Heart left ventricle (tissue), 16 donors: ENCODE measurements at regions of chr2 and their contacts with region 1.

Region 1: GRCh38 chr2:37877457-37878315 is 47.4 kb upstream of the RMDN2 start:
- DNase-seq: peak in 1 of 5 donors; percentile 39
- ATAC-seq: peak; percentile 43 to 64 (median 46)
- H3K4me3 ChIP-seq: peak overlapping the region in 1 of 12 donors; percentile 12
- H3K27ac ChIP-seq: peak overlapping the region in 2 of 12 donors; percentile 5 to 8
- H3K4me1 ChIP-seq: peaks cover 0 to 47% (median 27%) of the 10 kb centered on the region in 12 donors
- H3K27me3 ChIP-seq: peaks cover 0 to 2% (median 0%) of the 10 kb centered on the region in 9 donors
- CTCF ChIP-seq: peak; percentile 61 to 87 (median 82)
- POLR2A ChIP-seq: no peak

Region 2: GRCh38 chr2:37173741-37174140 is 703.9 kb before region 1 on chr2:
- intact Hi-C with region 1: loop called in 1 of 10 experiments (anchors 10 kb)
- DNase-seq: no peak
- ATAC-seq: no peak
- H3K4me3 ChIP-seq: no peak overlapping the region
- H3K27ac ChIP-seq: no peak overlapping the region
- H3K4me1 ChIP-seq: no peaks in the 10 kb centered on the region
- H3K27me3 ChIP-seq: no peaks in the 10 kb centered on the region
- CTCF ChIP-seq: no peak
- POLR2A ChIP-seq: no peak

Region 3: DNA sequence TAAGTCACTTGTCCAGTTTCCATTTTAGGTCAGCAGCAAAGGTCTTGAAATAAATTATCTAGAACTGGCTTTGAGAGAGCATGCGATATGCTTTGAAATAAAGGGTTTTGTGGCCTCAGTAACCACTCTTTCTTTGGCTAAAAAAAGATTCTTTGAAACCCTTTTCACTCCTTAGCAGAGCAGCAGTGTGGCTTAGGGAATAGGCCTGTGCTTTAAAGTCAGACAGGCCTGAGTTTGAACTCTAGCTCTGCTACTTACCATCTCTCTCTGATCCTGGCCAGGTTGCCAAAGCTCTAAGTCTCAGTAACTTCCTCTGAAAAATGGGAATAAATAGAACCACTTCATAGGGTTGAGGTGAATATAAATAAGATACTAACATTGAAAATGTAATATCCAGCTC is 480.5 kb before region 1 on chr2:
- intact Hi-C with region 1: loop called in 7 of 10 experiments (anchors 1 to 5 kb)
- DNase-seq: no peak
- ATAC-seq: no peak
- H3K4me3 ChIP-seq: no peak overlapping the region
- H3K27ac ChIP-seq: no peak overlapping the region
- H3K4me1 ChIP-seq: peaks cover 0 to 27% (median 0%) of the 10 kb centered on the region in 12 donors
- H3K27me3 ChIP-seq: no peaks in the 10 kb centered on the region
- CTCF ChIP-seq: no peak
- POLR2A ChIP-seq: no peak

Region 4: GRCh38 chr2:37529830-37530415 is 347.8 kb before region 1 on chr2:
- intact Hi-C with region 1: loop called in 1 of 10 experiments (anchors 10 kb)
- DNase-seq: no peak
- ATAC-seq: no peak
- H3K4me3 ChIP-seq: no peak overlapping the region
- H3K27ac ChIP-seq: no peak overlapping the region
- H3K4me1 ChIP-seq: peaks cover 0 to 12% (median 2%) of the 10 kb centered on the region in 12 donors
- H3K27me3 ChIP-seq: no peaks in the 10 kb centered on the region
- CTCF ChIP-seq: no peak
- POLR2A ChIP-seq: no peak

Region 5: DNA sequence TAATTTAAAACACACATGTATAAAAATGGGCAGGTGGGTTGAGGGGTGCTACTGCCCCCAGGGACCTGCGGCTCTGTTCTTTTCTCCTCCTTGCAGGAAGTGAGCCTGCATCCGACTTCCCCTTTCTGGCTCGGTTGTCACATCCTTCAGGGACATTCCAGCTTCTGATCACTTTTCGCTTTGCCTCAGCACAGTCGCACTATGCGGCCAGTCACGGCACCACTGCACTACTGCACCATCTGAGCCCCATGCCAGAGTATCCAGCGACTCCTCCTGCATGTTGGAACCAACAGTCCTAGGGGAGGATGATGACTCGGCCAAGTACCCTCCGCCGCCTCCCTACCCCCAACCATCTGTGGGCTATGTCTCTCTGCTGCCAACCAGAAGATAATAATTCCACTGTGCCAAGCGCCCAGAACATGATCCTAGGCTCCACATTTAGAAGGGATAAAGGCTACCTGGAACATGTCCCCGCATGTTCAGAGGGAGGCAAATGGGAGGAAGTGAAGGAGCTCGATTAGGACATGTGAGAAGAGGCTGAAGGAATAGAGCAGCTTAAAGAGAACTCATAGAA is 223.8 kb before region 1 on chr2:
- intact Hi-C with region 1: loop called in 5 of 10 experiments (anchors 5 to 10 kb)
- DNase-seq: peak; percentile 70 to 89 (median 79)
- ATAC-seq: peak; percentile 74 to 87 (median 79)
- H3K4me3 ChIP-seq: peak overlapping the region in 9 of 12 donors; percentile 1 to 38 (median 19)
- H3K27ac ChIP-seq: peak overlapping the region; percentile 76 to 95 (median 90)
- H3K4me1 ChIP-seq: peaks cover 28 to 98% (median 90%) of the 10 kb centered on the region in 12 donors
- H3K27me3 ChIP-seq: no peaks in the 10 kb centered on the region
- CTCF ChIP-seq: no peak
- POLR2A ChIP-seq: peak in 1 of 2 donors; percentile 34

Region 6: GRCh38 chr2:37672104-37672869 is 205.4 kb before region 1 on chr2:
- intact Hi-C with region 1: loop called in 5 of 10 experiments (anchors 2 to 10 kb)
- DNase-seq: peak; percentile 83 to 87 (median 84)
- ATAC-seq: peak; percentile 68 to 86 (median 73)
- H3K4me3 ChIP-seq: peak overlapping the region; percentile 54 to 99 (median 92)
- H3K27ac ChIP-seq: peak overlapping the region; percentile 92 to 100 (median 98)
- H3K4me1 ChIP-seq: peaks cover 0 to 64% (median 14%) of the 10 kb centered on the region in 12 donors
- H3K27me3 ChIP-seq: no peaks in the 10 kb centered on the region
- CTCF ChIP-seq: peak in 1 of 12 donors; percentile 9
- POLR2A ChIP-seq: peak in 1 of 2 donors; percentile 19

Region 7: GRCh38 chr2:37730037-37730818 is 147.5 kb before region 1 on chr2:
- intact Hi-C with region 1: no loop called
- DNase-seq: no peak
- ATAC-seq: no peak
- H3K4me3 ChIP-seq: no peak overlapping the region
- H3K27ac ChIP-seq: no peak overlapping the region
- H3K4me1 ChIP-seq: peaks cover 0 to 14% (median 0%) of the 10 kb centered on the region in 12 donors
- H3K27me3 ChIP-seq: no peaks in the 10 kb centered on the region
- CTCF ChIP-seq: no peak
- POLR2A ChIP-seq: no peak

Region 8: DNA sequence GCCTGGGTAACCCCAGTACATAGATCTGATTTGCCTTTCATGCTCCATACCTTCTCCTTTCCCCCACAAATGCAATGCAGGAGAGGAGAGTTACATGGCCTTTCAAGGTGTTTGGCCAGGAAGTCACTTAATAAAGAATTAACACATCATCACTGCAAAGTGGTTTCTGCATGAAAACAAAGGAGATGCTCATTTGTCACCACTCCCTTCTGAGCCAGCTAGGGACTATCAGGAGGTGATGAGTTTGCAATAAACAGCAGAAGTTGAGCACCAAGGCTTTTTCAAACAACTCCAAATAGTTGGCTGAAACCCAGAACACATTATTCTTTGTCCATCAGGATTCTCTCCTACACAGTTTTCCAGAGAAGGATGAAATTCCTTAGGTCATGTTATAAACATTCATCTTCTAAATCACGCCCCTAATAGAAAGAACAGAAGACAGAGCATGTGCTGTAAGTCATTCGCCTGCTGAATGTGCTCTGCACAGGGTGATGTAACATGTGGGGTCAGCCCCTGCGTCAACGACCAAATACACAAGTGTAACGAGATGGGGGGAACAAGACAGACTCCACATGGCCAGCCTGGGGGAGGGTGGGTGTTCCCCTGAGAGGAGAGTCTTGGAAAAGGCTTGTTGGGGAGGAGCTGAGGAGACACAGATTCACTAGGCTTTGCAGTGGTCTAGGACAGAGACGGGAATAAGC is 39.9 kb before region 1 on chr2:
- intact Hi-C with region 1: loop called (anchors 1 to 10 kb)
- DNase-seq: peak in 3 of 5 donors; percentile 31 to 66 (median 52)
- ATAC-seq: peak in 3 of 4 donors; percentile 64 to 82 (median 80)
- H3K4me3 ChIP-seq: no peak overlapping the region
- H3K27ac ChIP-seq: peak overlapping the region in 1 of 12 donors; percentile 65
- H3K4me1 ChIP-seq: peaks cover 0 to 11% (median 2%) of the 10 kb centered on the region in 12 donors
- H3K27me3 ChIP-seq: no peaks in the 10 kb centered on the region
- CTCF ChIP-seq: no peak
- POLR2A ChIP-seq: no peak